ENCODE measurements at regions of chr14 and their contacts with region 1.

Region 1: DNA sequence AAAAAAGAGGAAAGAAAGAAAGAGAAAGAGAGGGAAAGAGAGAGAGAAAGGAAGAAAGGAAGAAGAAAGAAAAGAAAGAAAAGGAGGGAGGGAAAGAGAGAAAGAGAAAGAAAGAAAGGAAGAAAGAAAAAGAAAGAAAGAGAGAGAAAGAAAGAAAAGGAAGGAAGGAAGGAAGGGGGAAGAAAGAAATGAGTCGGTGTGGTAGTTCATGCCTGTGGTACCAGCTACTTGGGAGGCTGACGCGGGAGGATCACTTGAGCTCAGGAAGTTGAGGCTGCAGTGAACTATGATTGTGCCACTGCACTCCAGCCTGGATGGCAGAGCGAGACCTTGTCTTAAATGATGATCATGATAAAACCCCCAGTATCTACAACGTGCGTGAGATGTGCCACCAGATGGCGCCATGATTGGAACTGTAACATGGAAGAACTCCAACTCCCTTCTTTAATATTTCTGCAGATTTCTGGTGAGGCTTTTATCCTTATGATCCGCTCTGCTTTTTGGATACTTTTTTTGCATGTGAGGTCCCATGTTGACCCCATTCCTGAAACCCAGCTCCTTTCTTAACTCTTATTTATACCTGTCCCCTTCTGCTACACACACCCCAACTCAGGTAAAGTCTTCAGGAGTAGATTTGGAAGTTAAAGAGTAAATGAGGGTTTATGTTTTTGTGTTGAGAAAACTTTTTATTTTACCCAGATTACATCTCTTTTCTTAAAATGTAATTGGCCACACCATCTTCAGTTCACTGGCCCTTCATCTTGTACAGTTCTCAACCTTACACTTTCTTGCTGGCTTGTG is 25.6 kb downstream of the RNASE10 start:
- DNase-seq: peak; percentile 46 to 84
- ATAC-seq: peak; percentile 92 to 98
- H3K4me3 ChIP-seq: peak overlapping the region; percentile 18; the same call in 1 of the 3 replicates
- H3K27ac ChIP-seq: no peak overlapping the region
- H3K4me1 ChIP-seq: no peaks in the 10 kb centered on the region
- CTCF ChIP-seq: peak; percentile 83
- EP300 ChIP-seq: no peak
- POLR2A ChIP-seq: no peak
- RAD21 ChIP-seq: peak; percentile 59 to 65

Region 2: DNA sequence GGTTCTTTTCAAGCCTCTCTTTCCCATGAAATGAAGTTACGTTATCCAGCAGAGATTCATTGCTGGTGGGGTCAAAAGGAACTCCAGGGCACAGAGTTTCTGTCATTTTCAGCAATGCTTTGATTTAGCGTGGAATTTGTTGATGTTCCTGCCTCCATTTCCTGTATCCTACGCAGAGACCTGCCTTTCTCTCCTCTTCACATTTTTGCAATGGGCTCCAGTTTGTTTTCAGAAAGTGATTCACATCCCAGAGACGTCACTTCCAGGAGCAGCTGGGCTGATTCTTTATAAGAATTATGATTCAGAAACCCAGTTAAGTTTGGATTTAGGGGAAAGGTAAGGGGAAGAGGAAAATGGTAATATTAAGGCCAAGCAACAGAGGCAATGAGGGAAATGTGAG is 14.1 kb before region 1 on chr14:
- CTCF ChIA-PET with region 1: interaction called, 16 read pairs
- POLR2A ChIA-PET with region 1: no interaction called
- DNase-seq: no peak
- ATAC-seq: no peak
- H3K4me3 ChIP-seq: no peak overlapping the region
- H3K27ac ChIP-seq: no peak overlapping the region
- H3K4me1 ChIP-seq: no peaks in the 10 kb centered on the region
- CTCF ChIP-seq: no peak
- EP300 ChIP-seq: no peak
- POLR2A ChIP-seq: no peak
- RAD21 ChIP-seq: no peak

Region 3: GRCh38 chr14:20601482-20602080 is 70.6 kb after region 1 on chr14:
- CTCF ChIA-PET with region 1: interaction called, 13 read pairs
- POLR2A ChIA-PET with region 1: interaction called, 5 read pairs
- DNase-seq: no peak
- ATAC-seq: no peak
- H3K4me3 ChIP-seq: no peak overlapping the region
- H3K27ac ChIP-seq: no peak overlapping the region
- H3K4me1 ChIP-seq: no peaks in the 10 kb centered on the region
- CTCF ChIP-seq: no peak
- EP300 ChIP-seq: no peak
- POLR2A ChIP-seq: no peak
- RAD21 ChIP-seq: no peak

Region 4: GRCh38 chr14:20690848-20691523 is 160.0 kb after region 1 on chr14:
- CTCF ChIA-PET with region 1: interaction called, 13 read pairs
- POLR2A ChIA-PET with region 1: no interaction called
- DNase-seq: peak; percentile 71 to 81
- ATAC-seq: peak; percentile 82 to 84
- H3K4me3 ChIP-seq: peak overlapping the region; percentile 5; the same call in 1 of the 3 replicates
- H3K27ac ChIP-seq: peak overlapping the region; percentile 2 to 26; a peak in 1 of 6 replicates
- H3K4me1 ChIP-seq: peaks cover 34% of the 10 kb centered on the region
- CTCF ChIP-seq: peak; percentile 88
- EP300 ChIP-seq: no peak
- POLR2A ChIP-seq: no peak
- RAD21 ChIP-seq: peak; percentile 88 to 92